PC-3 (cell line): ENCODE measurements at regions of chr1 and their contacts with region 1.

Region 1: DNA sequence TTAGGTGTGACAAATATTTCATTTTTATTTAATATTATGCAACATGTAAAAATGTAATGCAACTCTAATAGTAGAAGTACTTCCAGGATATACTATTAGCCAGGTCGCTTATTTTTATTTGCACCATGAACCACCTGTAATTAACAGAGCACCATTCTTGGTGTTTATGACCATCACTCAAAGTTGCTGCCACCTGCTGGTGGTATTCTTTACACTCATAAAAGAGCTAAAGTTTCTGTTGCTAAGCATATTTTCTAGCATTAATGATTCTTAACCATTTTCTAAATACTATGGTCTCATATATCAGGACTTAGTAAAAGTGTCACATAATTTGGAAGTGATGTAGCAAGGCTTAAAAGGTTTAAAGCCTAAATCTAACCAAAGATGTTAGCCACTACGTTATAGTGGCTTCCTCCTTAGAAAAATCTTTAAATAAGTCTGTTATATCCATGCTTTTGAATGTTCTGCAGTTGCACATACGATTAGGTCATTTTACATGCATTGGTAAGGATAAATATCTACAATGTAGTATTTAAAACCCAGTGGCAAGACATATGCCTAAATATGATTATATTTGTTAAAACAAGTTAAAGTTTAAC is 244.5 kb downstream of the NEGR1 start:
- DNase-seq: peak; percentile 67
- ATAC-seq: peak; percentile 29; the same call in 1 of the 2 replicates
- H3K4me3 ChIP-seq: no peak overlapping the region
- H3K27ac ChIP-seq: no peak overlapping the region
- H3K4me1 ChIP-seq: no peaks in the 10 kb centered on the region
- H3K27me3 ChIP-seq: no peaks in the 10 kb centered on the region
- CTCF ChIP-seq: peak; percentile 85

Region 2: GRCh38 chr1:71587961-71588360 is 449.9 kb before region 1 on chr1:
- CTCF ChIA-PET with region 1: interaction called, 3 read pairs
- POLR2A ChIA-PET with region 1: no interaction called
- intact Hi-C with region 1: loop called (anchors 1 kb)
- DNase-seq: peak; percentile 47
- ATAC-seq: no peak; the same call in 1 of the 2 replicates
- H3K4me3 ChIP-seq: no peak overlapping the region
- H3K27ac ChIP-seq: no peak overlapping the region
- H3K4me1 ChIP-seq: peaks cover 14% of the 10 kb centered on the region
- H3K27me3 ChIP-seq: no peaks in the 10 kb centered on the region
- CTCF ChIP-seq: peak; percentile 60

Region 3: GRCh38 chr1:71979882-71980281 is 58.0 kb before region 1 on chr1:
- CTCF ChIA-PET with region 1: no interaction called
- POLR2A ChIA-PET with region 1: no interaction called
- intact Hi-C with region 1: loop called (anchors 10 kb)
- DNase-seq: no peak
- ATAC-seq: no peak
- H3K4me3 ChIP-seq: no peak overlapping the region
- H3K27ac ChIP-seq: no peak overlapping the region
- H3K4me1 ChIP-seq: no peaks in the 10 kb centered on the region
- H3K27me3 ChIP-seq: no peaks in the 10 kb centered on the region
- CTCF ChIP-seq: no peak

Region 4: DNA sequence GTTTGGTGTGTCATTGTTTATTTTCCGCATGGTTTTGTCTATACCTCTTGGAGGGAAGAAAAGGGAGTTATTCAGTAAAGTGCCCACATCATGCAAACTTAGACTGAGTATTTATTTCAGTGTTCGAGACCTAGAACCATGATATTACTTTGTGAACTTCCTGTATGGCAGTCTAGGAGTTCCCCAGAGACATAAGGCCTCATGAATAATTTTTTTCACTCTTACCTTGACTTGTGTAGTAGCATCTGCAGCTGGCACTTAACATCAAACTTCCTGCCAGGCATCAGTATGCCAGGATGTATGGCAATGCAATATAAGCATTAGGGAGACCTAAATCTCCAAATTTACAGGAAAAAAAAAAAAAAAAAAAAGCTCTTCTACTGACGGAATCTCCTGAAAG is 43.2 kb before region 1 on chr1:
- CTCF ChIA-PET with region 1: no interaction called
- POLR2A ChIA-PET with region 1: no interaction called
- intact Hi-C with region 1: no loop called
- DNase-seq: no peak
- ATAC-seq: no peak
- H3K4me3 ChIP-seq: no peak overlapping the region
- H3K27ac ChIP-seq: no peak overlapping the region
- H3K4me1 ChIP-seq: no peaks in the 10 kb centered on the region
- H3K27me3 ChIP-seq: no peaks in the 10 kb centered on the region
- CTCF ChIP-seq: no peak